ENCODE measurements at regions of chr19 and their contacts with region 1.

Region 1: GRCh38 chr19:6862673-6863078 is 24.7 kb upstream of the ADGRE1 start:
- DNase-seq: peak; percentile 85 to 92 (median 91)
- H3K4me3 ChIP-seq: peak overlapping the region in 3 of 7 experiments; percentile 60 to 75 (median 69)
- H3K27ac ChIP-seq: no peak overlapping the region
- H3K4me1 ChIP-seq: peaks cover 4 to 40% (median 31%) of the 10 kb centered on the region in 4 experiments
- H3K27me3 ChIP-seq: no peaks in the 10 kb centered on the region

Region 2: GRCh38 chr19:6516659-6517291 is 345.9 kb before region 1 on chr19:
- CTCF ChIA-PET with region 1: interaction called, 16 read pairs
- POLR2A ChIA-PET with region 1: no interaction called
- DNase-seq: peak; percentile 81 to 87 (median 87)
- H3K4me3 ChIP-seq: peak overlapping the region; percentile 58 to 94 (median 79)
- H3K27ac ChIP-seq: peak overlapping the region in 1 of 2 experiments; percentile 58
- H3K4me1 ChIP-seq: peaks cover 7 to 27% (median 24%) of the 10 kb centered on the region in 4 experiments
- H3K27me3 ChIP-seq: no peaks in the 10 kb centered on the region

Region 3: GRCh38 chr19:6737284-6738046 is 125.2 kb before region 1 on chr19 and contains the start of gene GPR108:
- CTCF ChIA-PET with region 1: interaction called, 31 read pairs
- POLR2A ChIA-PET with region 1: interaction called, 7 read pairs
- DNase-seq: peak; percentile 100
- H3K4me3 ChIP-seq: peak within 1 kb of the TSS; percentile 77 to 93 (median 79)
- H3K27ac ChIP-seq: peak within 1 kb of the TSS; percentile 95 to 98
- H3K4me1 ChIP-seq: peaks cover 5 to 54% (median 50%) of the 10 kb centered on the region in 4 experiments
- H3K27me3 ChIP-seq: no peaks in the 10 kb centered on the region

Region 4: GRCh38 chr19:6817179-6817578 is 45.5 kb before region 1 on chr19:
- CTCF ChIA-PET with region 1: interaction called, 15 read pairs
- POLR2A ChIA-PET with region 1: no interaction called
- DNase-seq: no peak
- H3K4me3 ChIP-seq: no peak overlapping the region
- H3K27ac ChIP-seq: no peak overlapping the region
- H3K4me1 ChIP-seq: peaks cover 0 to 3% (median 0%) of the 10 kb centered on the region in 4 experiments
- H3K27me3 ChIP-seq: no peaks in the 10 kb centered on the region

Region 5: DNA sequence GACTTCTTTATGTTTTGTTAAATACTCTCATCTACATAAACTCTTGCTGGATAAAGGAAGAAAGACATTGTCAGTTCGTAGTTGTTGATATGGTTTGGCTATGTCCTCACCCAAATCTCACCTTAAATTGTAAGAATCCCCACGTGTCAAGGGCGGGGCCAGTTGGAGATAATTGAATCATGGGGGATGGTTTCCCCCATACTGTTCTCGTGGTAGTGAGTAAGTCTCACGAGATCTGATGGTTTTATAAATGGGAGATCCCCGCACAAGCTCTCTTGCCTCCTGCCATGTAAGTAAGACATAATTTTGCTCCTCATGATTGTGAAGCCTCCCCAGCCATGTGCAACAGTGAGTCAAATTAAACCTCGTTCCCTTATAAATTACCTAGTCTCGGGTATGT is 28.3 kb after region 1 on chr19:
- CTCF ChIA-PET with region 1: interaction called, 10 read pairs
- POLR2A ChIA-PET with region 1: interaction called, 3 read pairs
- DNase-seq: peak in 1 of 3 donors; percentile 45
- H3K4me3 ChIP-seq: no peak overlapping the region
- H3K27ac ChIP-seq: peak overlapping the region in 1 of 2 experiments; percentile 67
- H3K4me1 ChIP-seq: peaks cover 25 to 68% (median 58%) of the 10 kb centered on the region in 4 experiments
- H3K27me3 ChIP-seq: no peaks in the 10 kb centered on the region

Region 6: GRCh38 chr19:6925801-6926751 is 63.4 kb after region 1 on chr19:
- CTCF ChIA-PET with region 1: no interaction called
- POLR2A ChIA-PET with region 1: no interaction called
- DNase-seq: peak; percentile 38 to 67 (median 42)
- H3K4me3 ChIP-seq: peak overlapping the region in 1 of 7 experiments; percentile 43
- H3K27ac ChIP-seq: no peak overlapping the region
- H3K4me1 ChIP-seq: peaks cover 0 to 8% (median 7%) of the 10 kb centered on the region in 4 experiments
- H3K27me3 ChIP-seq: no peaks in the 10 kb centered on the region

Region 7: DNA sequence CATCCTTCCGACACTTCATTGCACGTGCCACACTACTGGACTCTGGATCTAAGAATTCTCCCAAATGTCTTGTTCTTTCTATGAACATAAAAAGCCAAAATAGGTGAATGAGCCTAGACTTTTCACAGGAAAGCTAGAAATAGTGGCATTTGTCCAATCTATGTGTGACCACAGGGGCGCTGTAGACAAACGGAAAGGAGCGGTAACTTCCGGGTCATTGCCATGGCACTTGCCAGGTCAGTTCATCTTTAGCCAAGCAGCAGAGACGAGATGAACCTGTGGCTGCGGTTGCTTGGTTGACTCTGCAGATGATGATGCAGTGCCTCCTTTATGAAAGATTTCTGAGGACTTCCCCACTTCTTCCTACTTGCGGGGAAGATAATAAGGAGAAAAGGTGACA is 90.3 kb after region 1 on chr19:
- CTCF ChIA-PET with region 1: no interaction called
- POLR2A ChIA-PET with region 1: no interaction called
- DNase-seq: no peak
- H3K4me3 ChIP-seq: no peak overlapping the region
- H3K27ac ChIP-seq: no peak overlapping the region
- H3K4me1 ChIP-seq: peaks cover 0 to 1% (median under 1%) of the 10 kb centered on the region in 4 experiments
- H3K27me3 ChIP-seq: peaks cover 0 to 4% (median 2%) of the 10 kb centered on the region in 5 experiments